Heart left ventricle (tissue), 16 donors: ENCODE measurements at regions of chr2 and their contacts with region 1.

Region 1: DNA sequence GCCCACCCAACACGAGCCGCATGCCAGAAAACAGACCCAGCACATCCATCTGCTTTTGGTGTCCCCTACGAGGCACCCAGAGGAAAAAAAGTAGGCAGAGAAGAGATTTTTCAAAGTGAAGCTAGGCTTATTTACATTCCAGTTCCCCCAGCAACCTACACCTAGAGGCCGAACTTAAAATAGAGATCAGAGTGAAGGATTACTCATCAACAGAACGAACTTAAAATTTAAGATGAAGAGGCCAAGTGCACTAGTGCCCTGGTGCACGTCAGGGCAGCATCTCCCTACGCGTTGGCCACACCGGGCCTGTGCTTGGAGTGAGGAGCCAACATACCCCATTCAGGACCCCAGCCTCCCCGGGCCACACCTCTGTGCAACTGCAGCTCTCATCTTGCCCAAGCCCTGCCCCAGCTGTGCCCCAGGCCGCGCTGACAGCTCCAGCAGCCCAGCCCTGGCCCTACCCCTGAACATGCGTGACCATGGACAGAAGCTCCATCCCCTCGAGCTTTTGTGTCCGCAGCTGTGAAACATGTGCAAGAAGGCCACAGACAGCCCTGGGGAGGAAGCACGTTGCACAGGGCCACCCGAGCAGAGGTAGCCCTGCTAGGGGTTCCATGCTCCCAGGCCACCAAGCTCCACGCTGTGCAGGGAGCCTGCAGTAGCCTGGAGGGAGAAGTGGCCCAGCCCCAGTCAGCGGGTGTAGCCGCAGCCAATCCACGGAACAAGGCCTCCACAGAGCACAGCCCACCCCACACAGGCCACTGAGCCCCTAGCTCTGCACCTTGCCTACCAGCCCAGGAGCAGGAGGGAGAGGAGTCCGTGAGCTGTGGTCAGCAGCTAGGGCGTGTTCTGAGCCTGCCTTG is 184.3 kb downstream of the SEPTIN10 start:
- DNase-seq: peak in 1 of 5 donors; percentile 55
- ATAC-seq: peak in 1 of 4 donors; percentile 7
- H3K4me3 ChIP-seq: no peak overlapping the region
- H3K27ac ChIP-seq: no peak overlapping the region
- H3K4me1 ChIP-seq: no peaks in the 10 kb centered on the region
- H3K27me3 ChIP-seq: no peaks in the 10 kb centered on the region
- CTCF ChIP-seq: no peak
- POLR2A ChIP-seq: no peak

Region 2: GRCh38 chr2:109348671-109349550 is 80.6 kb before region 1 on chr2:
- intact Hi-C with region 1: loop called in 1 of 10 experiments (anchors 5 kb)
- DNase-seq: no peak
- ATAC-seq: peak; percentile 34 to 59 (median 50)
- H3K4me3 ChIP-seq: no peak overlapping the region
- H3K27ac ChIP-seq: peak overlapping the region in 3 of 12 donors; percentile 37 to 61 (median 57)
- H3K4me1 ChIP-seq: peaks cover 9 to 44% (median 31%) of the 10 kb centered on the region in 12 donors
- H3K27me3 ChIP-seq: no peaks in the 10 kb centered on the region
- CTCF ChIP-seq: no peak
- POLR2A ChIP-seq: no peak

Region 3: DNA sequence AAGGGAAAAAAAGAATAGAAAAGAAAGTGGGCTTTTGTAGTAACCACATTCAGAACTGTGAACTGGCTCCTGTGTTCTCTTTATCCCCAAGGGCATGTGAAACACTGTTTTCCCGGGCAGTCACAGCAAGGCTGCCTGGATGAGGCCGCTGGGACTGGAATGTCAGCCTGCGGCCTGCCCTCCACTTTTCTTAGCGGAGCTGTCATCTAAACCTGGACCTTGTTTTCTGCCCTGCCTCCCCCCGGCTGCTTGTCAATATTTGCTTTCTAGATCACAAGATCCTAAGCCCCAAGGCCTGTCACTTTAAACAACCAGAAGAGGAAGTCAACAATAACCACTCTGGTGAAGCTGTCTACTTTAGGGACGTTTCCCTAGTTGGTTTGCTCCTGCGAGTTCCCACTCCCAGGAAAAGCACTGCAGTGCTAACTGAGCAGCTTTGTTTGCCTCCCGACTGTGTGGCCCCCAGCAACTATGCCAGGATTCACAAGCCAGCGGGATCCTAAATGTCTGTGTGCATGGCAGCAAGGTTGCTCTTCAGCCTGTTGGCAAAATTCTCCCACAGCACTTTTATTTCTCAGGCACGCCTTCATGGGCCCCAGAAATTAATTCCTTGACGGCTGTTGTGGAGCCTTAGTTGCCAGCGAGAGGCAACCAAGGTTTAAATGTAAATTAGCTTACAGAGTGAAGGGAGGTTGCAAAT is 215.3 kb after region 1 on chr2:
- intact Hi-C with region 1: no loop called
- DNase-seq: peak in 2 of 5 donors; percentile 15 to 36
- ATAC-seq: peak in 3 of 4 donors; percentile 41 to 73 (median 66)
- H3K4me3 ChIP-seq: no peak overlapping the region
- H3K27ac ChIP-seq: peak overlapping the region in 8 of 12 donors; percentile 5 to 89 (median 41)
- H3K4me1 ChIP-seq: peaks cover 0 to 18% (median 6%) of the 10 kb centered on the region in 12 donors
- H3K27me3 ChIP-seq: no peaks in the 10 kb centered on the region
- CTCF ChIP-seq: no peak
- POLR2A ChIP-seq: no peak